Prostate gland (tissue), 2 donors: ENCODE measurements at regions of chr19 and their contacts with region 1.

Region 1: DNA sequence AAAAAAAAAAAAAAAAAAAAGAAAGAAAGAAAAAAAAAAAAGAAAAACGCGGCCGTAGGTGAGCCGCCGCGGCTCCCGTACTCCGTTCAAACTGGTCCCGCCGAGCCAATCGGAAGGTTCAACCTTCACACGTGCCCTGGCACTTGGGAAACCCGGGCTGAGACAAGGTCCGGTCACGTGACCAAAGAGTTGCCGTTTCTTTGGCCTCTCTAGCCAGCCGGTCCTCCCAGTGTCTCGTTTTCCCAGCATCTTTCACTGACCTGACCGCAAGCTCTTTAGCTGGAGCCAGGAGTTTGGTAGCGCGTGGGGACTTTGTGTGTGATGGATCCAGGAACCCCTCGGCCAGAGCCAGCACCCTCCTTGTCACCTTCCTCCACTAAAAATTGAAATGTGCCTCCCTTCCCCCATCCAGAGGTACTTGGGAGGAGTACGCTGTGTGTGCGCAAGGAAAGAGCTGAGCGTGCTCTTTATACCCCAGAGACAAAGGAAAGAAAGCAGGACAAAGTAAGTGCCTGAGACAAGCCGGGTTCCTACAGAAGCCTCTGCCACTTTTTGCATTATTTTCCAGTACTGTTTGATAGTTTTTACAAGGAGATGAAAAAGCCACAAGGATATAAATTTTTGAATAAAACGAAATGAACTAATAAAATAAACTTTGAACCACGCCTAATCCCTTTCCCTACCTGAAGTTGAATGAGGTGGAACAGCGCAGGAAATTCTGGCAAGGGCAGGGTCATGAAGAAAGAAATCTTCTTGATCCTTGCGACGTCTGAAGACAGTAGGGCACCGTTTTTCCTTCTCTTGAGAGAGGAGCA is 959 bp downstream of the TNPO2 start:
- DNase-seq: peak; percentile 99
- H3K4me3 ChIP-seq: peak overlapping the region; percentile 75 to 83
- H3K27ac ChIP-seq: peak overlapping the region; percentile 87 to 95
- H3K4me1 ChIP-seq: peaks cover 11% of the 10 kb centered on the region
- H3K27me3 ChIP-seq: no peaks in the 10 kb centered on the region
- CTCF ChIP-seq: peak in 1 of 4 experiments; percentile 14
- POLR2A ChIP-seq: no peak

Region 2: GRCh38 chr19:12703046-12703445 is 19.7 kb before region 1 on chr19:
- intact Hi-C with region 1: no loop called
- DNase-seq: no peak
- H3K4me3 ChIP-seq: no peak overlapping the region
- H3K27ac ChIP-seq: no peak overlapping the region
- H3K4me1 ChIP-seq: no peaks in the 10 kb centered on the region
- H3K27me3 ChIP-seq: no peaks in the 10 kb centered on the region
- CTCF ChIP-seq: no peak
- POLR2A ChIP-seq: no peak

Region 3: GRCh38 chr19:12789904-12790619 is 67.3 kb after region 1 on chr19:
- intact Hi-C with region 1: loop called (anchors 10 kb)
- DNase-seq: peak; percentile 94
- H3K4me3 ChIP-seq: peak overlapping the region; percentile 79 to 85
- H3K27ac ChIP-seq: peak overlapping the region; percentile 100
- H3K4me1 ChIP-seq: peaks cover 46% of the 10 kb centered on the region
- H3K27me3 ChIP-seq: no peaks in the 10 kb centered on the region
- CTCF ChIP-seq: peak in 1 of 4 experiments; percentile 19
- POLR2A ChIP-seq: peak; percentile 79